ENCODE measurements at regions of chr7 and their contacts with region 1.

Region 1: GRCh38 chr7:13262929-13263530 is 575.6 kb downstream of the ARL4A start:
- DNase-seq: peak; percentile 10
- H3K4me3 ChIP-seq: no peak overlapping the region
- H3K27ac ChIP-seq: no peak overlapping the region
- H3K4me1 ChIP-seq: no peaks in the 10 kb centered on the region
- H3K27me3 ChIP-seq: no peaks in the 10 kb centered on the region
- CTCF ChIP-seq: peak; percentile 39 to 61

Region 2: DNA sequence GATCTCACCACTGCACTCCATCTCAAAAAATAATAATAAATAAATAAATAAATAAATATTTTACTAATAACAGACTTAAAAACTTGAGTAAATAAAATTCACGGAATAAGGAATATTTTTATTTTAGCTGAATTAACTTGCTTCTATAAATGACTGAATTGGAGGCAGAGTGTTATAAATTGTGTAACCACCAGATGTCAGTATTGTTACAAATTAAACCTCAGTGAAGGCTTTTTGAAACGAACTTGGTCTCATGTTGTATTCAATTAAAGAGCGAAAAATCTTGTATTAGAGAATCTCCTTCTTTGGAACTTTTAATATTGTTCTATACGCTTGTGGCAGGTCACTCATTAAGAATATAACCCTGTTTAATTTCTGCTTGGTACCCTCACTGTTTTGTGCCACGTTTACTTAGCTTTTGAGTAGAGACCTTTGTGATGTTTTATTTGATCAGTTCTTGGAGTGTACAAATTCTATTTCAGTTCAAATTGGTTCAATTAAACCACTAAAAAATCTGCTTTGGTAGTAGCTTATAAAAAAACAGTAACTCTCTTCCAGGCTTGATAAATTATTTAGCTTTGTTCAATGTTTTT is 738.1 kb before region 1 on chr7:
- CTCF ChIA-PET with region 1: no interaction called
- dilution Hi-C with region 1: no loop called
- in situ Hi-C with region 1: loop called in 1 of 2 experiments (anchors 25 kb)
- intact Hi-C with region 1: loop called (anchors 2 kb)
- DNase-seq: peak; percentile 28
- H3K4me3 ChIP-seq: no peak overlapping the region
- H3K27ac ChIP-seq: no peak overlapping the region
- H3K4me1 ChIP-seq: no peaks in the 10 kb centered on the region
- H3K27me3 ChIP-seq: no peaks in the 10 kb centered on the region
- CTCF ChIP-seq: peak; percentile 43 to 47

Region 3: GRCh38 chr7:12638851-12639467 is 624.1 kb before region 1 on chr7:
- CTCF ChIA-PET with region 1: no interaction called
- dilution Hi-C with region 1: no loop called
- in situ Hi-C with region 1: loop called in 1 of 2 experiments (anchors 10 kb)
- intact Hi-C with region 1: loop called (anchors 1 kb)
- DNase-seq: peak; percentile 32
- H3K4me3 ChIP-seq: no peak overlapping the region
- H3K27ac ChIP-seq: no peak overlapping the region
- H3K4me1 ChIP-seq: no peaks in the 10 kb centered on the region
- H3K27me3 ChIP-seq: no peaks in the 10 kb centered on the region
- CTCF ChIP-seq: peak; percentile 56 to 61

Region 4: GRCh38 chr7:12674849-12675248 is 588.2 kb before region 1 on chr7:
- CTCF ChIA-PET with region 1: no interaction called
- dilution Hi-C with region 1: no loop called
- in situ Hi-C with region 1: loop called (anchors 10 to 25 kb)
- intact Hi-C with region 1: no loop called
- DNase-seq: peak; percentile 30
- H3K4me3 ChIP-seq: no peak overlapping the region
- H3K27ac ChIP-seq: no peak overlapping the region
- H3K4me1 ChIP-seq: no peaks in the 10 kb centered on the region
- H3K27me3 ChIP-seq: no peaks in the 10 kb centered on the region
- CTCF ChIP-seq: peak; percentile 54 to 63

Region 5: GRCh38 chr7:12731214-12731656 is 531.8 kb before region 1 on chr7:
- CTCF ChIA-PET with region 1: no interaction called
- dilution Hi-C with region 1: no loop called
- in situ Hi-C with region 1: no loop called
- intact Hi-C with region 1: loop called (anchors 1 kb)
- DNase-seq: peak; percentile 69
- H3K4me3 ChIP-seq: no peak overlapping the region
- H3K27ac ChIP-seq: peak overlapping the region; percentile 26
- H3K4me1 ChIP-seq: peaks cover 13% of the 10 kb centered on the region
- H3K27me3 ChIP-seq: no peaks in the 10 kb centered on the region
- CTCF ChIP-seq: peak; percentile 9 to 62

Region 6: DNA sequence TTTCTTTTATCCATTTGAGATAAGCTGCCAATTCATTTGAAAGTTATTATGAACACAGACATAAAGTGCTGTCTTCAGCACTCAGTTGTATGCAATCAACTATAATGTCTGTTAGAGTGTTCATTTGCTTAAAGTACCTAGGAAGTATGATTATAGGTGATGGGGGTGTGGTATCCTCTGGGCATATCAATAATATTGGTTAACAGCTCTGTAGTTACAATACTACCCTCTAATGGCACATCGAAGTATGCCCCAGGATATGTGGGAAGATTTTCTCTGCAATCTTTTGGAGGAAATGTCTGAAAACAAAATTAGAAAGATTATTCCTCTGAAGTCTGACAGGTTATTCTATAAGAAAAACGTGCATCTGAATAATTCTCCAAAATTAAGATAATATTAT is 145.9 kb before region 1 on chr7:
- CTCF ChIA-PET with region 1: no interaction called
- dilution Hi-C with region 1: no loop called
- in situ Hi-C with region 1: no loop called
- intact Hi-C with region 1: loop called (anchors 10 kb)
- DNase-seq: no peak
- H3K4me3 ChIP-seq: no peak overlapping the region
- H3K27ac ChIP-seq: no peak overlapping the region
- H3K4me1 ChIP-seq: peaks cover 7% of the 10 kb centered on the region
- H3K27me3 ChIP-seq: no peaks in the 10 kb centered on the region
- CTCF ChIP-seq: peak; percentile 42 to 63

Region 7: GRCh38 chr7:13336227-13336626 is 73.2 kb after region 1 on chr7:
- CTCF ChIA-PET with region 1: no interaction called
- dilution Hi-C with region 1: no loop called
- in situ Hi-C with region 1: no loop called
- intact Hi-C with region 1: no loop called
- DNase-seq: peak; percentile 38
- H3K4me3 ChIP-seq: no peak overlapping the region
- H3K27ac ChIP-seq: no peak overlapping the region
- H3K4me1 ChIP-seq: no peaks in the 10 kb centered on the region
- H3K27me3 ChIP-seq: no peaks in the 10 kb centered on the region
- CTCF ChIP-seq: no peak

Region 8: GRCh38 chr7:13476881-13477444 is 213.9 kb after region 1 on chr7:
- CTCF ChIA-PET with region 1: no interaction called
- dilution Hi-C with region 1: no loop called
- in situ Hi-C with region 1: no loop called
- intact Hi-C with region 1: no loop called
- DNase-seq: no peak
- H3K4me3 ChIP-seq: no peak overlapping the region
- H3K27ac ChIP-seq: no peak overlapping the region
- H3K4me1 ChIP-seq: no peaks in the 10 kb centered on the region
- H3K27me3 ChIP-seq: no peaks in the 10 kb centered on the region
- CTCF ChIP-seq: peak in 1 of 2 donors; percentile 11

Measured in mammary epithelial cell (primary cell).